ENCODE measurements at regions of chr5 and their contacts with region 1.

Region 1: GRCh38 chr5:89816038-89816437 is 593.5 kb downstream of the CETN3 start:
- DNase-seq: no peak
- H3K4me3 Mint-ChIP-seq: no peak overlapping the region
- H3K27ac Mint-ChIP-seq: no peak overlapping the region
- H3K4me1 Mint-ChIP-seq: no peaks in the 10 kb centered on the region
- H3K27me3 Mint-ChIP-seq: no peaks in the 10 kb centered on the region
- CTCF ChIP-seq: no peak

Region 2: DNA sequence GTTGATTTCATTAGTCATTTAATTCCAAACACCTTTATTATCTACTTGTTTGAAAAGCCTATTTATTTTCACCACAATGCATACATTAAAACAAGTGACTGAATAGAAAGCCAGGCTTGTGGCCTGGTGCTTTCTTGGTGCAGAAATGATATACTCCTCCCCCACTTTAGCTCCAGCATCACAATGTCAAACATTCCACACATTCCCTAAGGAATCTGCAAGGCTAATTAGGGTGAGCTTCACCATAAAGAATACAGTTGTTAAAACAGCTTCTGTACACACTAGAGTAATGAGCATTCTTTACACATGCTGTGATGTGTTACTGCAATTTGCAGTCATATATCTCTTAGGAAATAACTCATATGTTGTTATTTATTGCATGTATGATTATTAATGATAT is 112.2 kb before region 1 on chr5:
- CTCF ChIA-PET with region 1: no interaction called
- intact Hi-C with region 1: no loop called
- DNase-seq: no peak
- H3K4me3 Mint-ChIP-seq: no peak overlapping the region
- H3K27ac Mint-ChIP-seq: no peak overlapping the region
- H3K4me1 Mint-ChIP-seq: no peaks in the 10 kb centered on the region
- H3K27me3 Mint-ChIP-seq: no peaks in the 10 kb centered on the region
- CTCF ChIP-seq: no peak

Region 3: GRCh38 chr5:89850513-89850865 is 34.5 kb after region 1 on chr5:
- CTCF ChIA-PET with region 1: interaction called, 12 read pairs
- intact Hi-C with region 1: no loop called
- DNase-seq: no peak
- H3K4me3 Mint-ChIP-seq: no peak overlapping the region
- H3K27ac Mint-ChIP-seq: no peak overlapping the region
- H3K4me1 Mint-ChIP-seq: no peaks in the 10 kb centered on the region
- H3K27me3 Mint-ChIP-seq: no peaks in the 10 kb centered on the region
- CTCF ChIP-seq: no peak